ENCODE measurements at regions of chr7 and their contacts with region 1.

Region 1: GRCh38 chr7:142301923-142302550 is 44.2 kb upstream of the PRSS58 start:
- DNase-seq: no peak
- H3K4me3 ChIP-seq: no peak overlapping the region
- H3K27ac ChIP-seq: no peak overlapping the region
- H3K4me1 ChIP-seq: no peaks in the 10 kb centered on the region
- H3K27me3 ChIP-seq: peaks cover 0 to 9% (median 4%) of the 10 kb centered on the region in 4 experiments; a peak in 3 of 7 replicates
- CTCF ChIP-seq: peak in 2 of 3 experiments; percentile 62 to 67; a peak in 3 of 4 replicates
- EP300 ChIP-seq: no peak
- POLR2A ChIP-seq: no peak
- RAD21 ChIP-seq: peak; percentile 26 to 38; a peak in 2 of 4 replicates

Region 2: DNA sequence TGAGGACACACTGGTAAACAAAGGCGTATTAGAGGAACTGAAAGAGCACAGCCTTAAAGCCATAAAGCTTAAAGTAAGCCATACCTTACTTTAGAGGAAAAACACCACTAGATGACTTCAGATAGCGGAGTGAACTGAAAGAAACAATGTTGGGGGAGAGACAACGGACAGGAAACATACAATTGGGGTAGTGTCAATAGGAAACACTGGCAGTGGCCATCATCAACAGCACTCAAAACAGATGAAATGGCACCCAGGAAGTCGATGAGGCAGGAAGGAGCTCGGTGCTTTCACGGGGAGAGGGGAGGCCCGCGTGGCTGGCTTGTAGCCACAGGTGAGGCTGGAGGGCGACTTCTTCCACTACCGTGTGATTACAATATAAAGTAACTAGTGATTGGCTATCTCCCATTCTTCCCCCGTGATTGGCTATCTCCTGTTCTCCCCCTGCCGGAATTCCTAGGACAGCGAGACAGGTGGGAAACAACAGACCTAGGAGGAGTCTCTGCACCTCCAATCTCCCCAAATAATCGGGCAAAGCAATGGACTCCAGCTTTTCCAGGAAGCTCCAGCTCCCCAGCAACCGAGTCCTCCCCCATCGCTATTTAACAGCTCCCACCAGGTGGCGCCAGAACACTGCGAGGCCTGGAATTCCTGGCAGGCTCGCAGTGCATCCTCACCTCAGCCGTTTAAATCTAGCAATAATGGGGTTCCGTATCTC is 326.1 kb before region 1 on chr7:
- CTCF ChIA-PET with region 1: interaction called, 12 read pairs
- POLR2A ChIA-PET with region 1: no interaction called
- DNase-seq: peak; percentile 79 to 96
- H3K4me3 ChIP-seq: peak overlapping the region in 2 of 4 experiments; percentile 2 to 29; a peak in 2 of 8 replicates
- H3K27ac ChIP-seq: no peak overlapping the region
- H3K4me1 ChIP-seq: no peaks in the 10 kb centered on the region; a peak in 1 of 7 replicates
- H3K27me3 ChIP-seq: no peaks in the 10 kb centered on the region
- CTCF ChIP-seq: peak; percentile 84 to 94 (median 91)
- EP300 ChIP-seq: peak in 1 of 2 experiments; percentile 19; a peak in 1 of 3 replicates
- POLR2A ChIP-seq: no peak
- RAD21 ChIP-seq: peak; percentile 98 to 99

Region 3: GRCh38 chr7:142272841-142273240 is 29.2 kb before region 1 on chr7:
- CTCF ChIA-PET with region 1: interaction called, 10 read pairs
- POLR2A ChIA-PET with region 1: no interaction called
- DNase-seq: no peak
- H3K4me3 ChIP-seq: no peak overlapping the region
- H3K27ac ChIP-seq: no peak overlapping the region
- H3K4me1 ChIP-seq: peaks cover 0 to 2% (median 0%) of the 10 kb centered on the region in 4 experiments; a peak in 1 of 7 replicates
- H3K27me3 ChIP-seq: no peaks in the 10 kb centered on the region; a peak in 1 of 7 replicates
- CTCF ChIP-seq: no peak
- EP300 ChIP-seq: no peak
- POLR2A ChIP-seq: no peak
- RAD21 ChIP-seq: no peak

Region 4: GRCh38 chr7:142338633-142339501 is 36.8 kb after region 1 on chr7:
- CTCF ChIA-PET with region 1: interaction called, 60 read pairs
- POLR2A ChIA-PET with region 1: no interaction called
- DNase-seq: peak; percentile 34 to 87
- H3K4me3 ChIP-seq: no peak overlapping the region
- H3K27ac ChIP-seq: no peak overlapping the region
- H3K4me1 ChIP-seq: peaks cover 0 to 5% (median 4%) of the 10 kb centered on the region in 4 experiments; a peak in 5 of 7 replicates
- H3K27me3 ChIP-seq: no peaks in the 10 kb centered on the region
- CTCF ChIP-seq: peak; percentile 89 to 92 (median 92)
- EP300 ChIP-seq: no peak
- POLR2A ChIP-seq: no peak
- RAD21 ChIP-seq: peak; percentile 92 to 94

Region 5: DNA sequence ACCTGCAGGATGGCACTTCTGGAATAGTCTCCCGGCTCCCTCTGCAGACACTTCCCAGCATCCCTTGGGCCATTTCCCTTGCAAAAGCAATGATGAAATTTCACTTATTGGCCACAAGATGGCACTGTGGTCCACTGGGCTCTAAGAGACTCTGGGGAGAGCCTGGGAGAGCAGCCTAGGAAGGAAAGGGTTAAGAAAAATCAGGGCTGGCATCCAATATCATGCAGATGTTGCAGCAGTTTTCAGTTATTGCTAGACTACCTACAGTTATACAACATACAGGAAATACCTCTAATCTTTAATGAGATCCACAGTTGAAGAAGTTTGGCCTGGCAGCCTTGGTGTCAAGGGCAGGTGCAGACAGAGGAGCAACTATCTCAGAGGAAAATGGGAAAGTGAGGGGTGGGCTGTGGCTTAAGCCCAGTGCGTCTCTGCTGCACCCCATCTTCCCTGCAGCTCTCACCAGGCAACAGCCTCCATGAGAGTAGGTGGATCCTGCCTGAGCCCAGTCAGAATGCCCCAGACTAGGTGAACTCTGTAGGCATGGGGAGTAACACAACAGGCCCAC is 56.0 kb after region 1 on chr7:
- CTCF ChIA-PET with region 1: interaction called, 19 read pairs
- POLR2A ChIA-PET with region 1: interaction called, 3 read pairs
- DNase-seq: peak in 1 of 2 experiments; percentile 56
- H3K4me3 ChIP-seq: no peak overlapping the region
- H3K27ac ChIP-seq: no peak overlapping the region
- H3K4me1 ChIP-seq: peaks cover 5 to 13% (median 9%) of the 10 kb centered on the region in 4 experiments; a peak in 5 of 7 replicates
- H3K27me3 ChIP-seq: no peaks in the 10 kb centered on the region
- CTCF ChIP-seq: peak; percentile 32 to 86 (median 86)
- EP300 ChIP-seq: no peak
- POLR2A ChIP-seq: no peak
- RAD21 ChIP-seq: peak; percentile 78 to 88

Region 6: GRCh38 chr7:142385491-142386340 is 83.7 kb after region 1 on chr7:
- CTCF ChIA-PET with region 1: interaction called, 16 read pairs
- POLR2A ChIA-PET with region 1: no interaction called
- DNase-seq: peak in 1 of 2 experiments; percentile 68
- H3K4me3 ChIP-seq: no peak overlapping the region
- H3K27ac ChIP-seq: no peak overlapping the region
- H3K4me1 ChIP-seq: no peaks in the 10 kb centered on the region; a peak in 1 of 7 replicates
- H3K27me3 ChIP-seq: no peaks in the 10 kb centered on the region
- CTCF ChIP-seq: peak; percentile 74 to 88 (median 88)
- EP300 ChIP-seq: peak in 1 of 2 experiments; percentile 20; a peak in 1 of 3 replicates
- POLR2A ChIP-seq: no peak
- RAD21 ChIP-seq: peak; percentile 52 to 65; a peak in 3 of 4 replicates

Region 7: DNA sequence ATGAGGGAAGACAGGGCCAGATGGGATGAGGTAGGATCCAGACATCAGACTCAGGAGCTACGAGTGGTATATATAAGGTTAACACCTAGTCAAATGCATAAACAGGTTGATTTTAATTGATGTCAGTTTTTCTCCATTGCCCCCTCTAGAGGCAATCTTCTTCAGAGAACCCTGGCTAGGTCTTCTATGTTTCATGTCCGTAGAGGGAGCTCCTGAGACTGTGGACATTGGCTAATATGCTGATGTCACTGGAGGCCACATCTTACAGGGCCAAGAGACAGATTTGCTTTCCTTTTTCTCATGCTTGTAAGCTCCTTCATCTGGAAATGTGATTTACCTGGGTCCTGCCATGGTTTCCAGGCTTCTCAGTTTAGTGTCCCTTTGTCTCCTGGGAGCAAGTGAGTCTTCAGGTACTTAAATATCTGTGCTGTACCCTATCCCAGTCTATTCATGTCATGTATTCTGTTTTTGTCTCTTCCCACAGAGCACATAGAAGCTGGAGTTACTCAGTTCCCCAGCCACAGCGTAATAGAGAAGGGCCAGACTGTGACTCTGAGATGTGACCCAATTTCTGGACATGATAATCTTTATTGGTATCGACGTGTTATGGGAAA is 285.6 kb after region 1 on chr7:
- CTCF ChIA-PET with region 1: no interaction called
- POLR2A ChIA-PET with region 1: no interaction called
- DNase-seq: no peak
- H3K4me3 ChIP-seq: no peak overlapping the region
- H3K27ac ChIP-seq: no peak overlapping the region
- H3K4me1 ChIP-seq: peaks cover 0 to 5% (median 3%) of the 10 kb centered on the region in 4 experiments; a peak in 3 of 7 replicates
- H3K27me3 ChIP-seq: no peaks in the 10 kb centered on the region
- CTCF ChIP-seq: peak in 2 of 3 experiments; percentile 84 to 99; a peak in 3 of 4 replicates
- EP300 ChIP-seq: no peak
- POLR2A ChIP-seq: no peak
- RAD21 ChIP-seq: peak; percentile 26 to 40; a peak in 3 of 4 replicates